Tibial artery (tissue), 4 donors: ENCODE measurements at regions of chr7 and their contacts with region 1.

Region 1: DNA sequence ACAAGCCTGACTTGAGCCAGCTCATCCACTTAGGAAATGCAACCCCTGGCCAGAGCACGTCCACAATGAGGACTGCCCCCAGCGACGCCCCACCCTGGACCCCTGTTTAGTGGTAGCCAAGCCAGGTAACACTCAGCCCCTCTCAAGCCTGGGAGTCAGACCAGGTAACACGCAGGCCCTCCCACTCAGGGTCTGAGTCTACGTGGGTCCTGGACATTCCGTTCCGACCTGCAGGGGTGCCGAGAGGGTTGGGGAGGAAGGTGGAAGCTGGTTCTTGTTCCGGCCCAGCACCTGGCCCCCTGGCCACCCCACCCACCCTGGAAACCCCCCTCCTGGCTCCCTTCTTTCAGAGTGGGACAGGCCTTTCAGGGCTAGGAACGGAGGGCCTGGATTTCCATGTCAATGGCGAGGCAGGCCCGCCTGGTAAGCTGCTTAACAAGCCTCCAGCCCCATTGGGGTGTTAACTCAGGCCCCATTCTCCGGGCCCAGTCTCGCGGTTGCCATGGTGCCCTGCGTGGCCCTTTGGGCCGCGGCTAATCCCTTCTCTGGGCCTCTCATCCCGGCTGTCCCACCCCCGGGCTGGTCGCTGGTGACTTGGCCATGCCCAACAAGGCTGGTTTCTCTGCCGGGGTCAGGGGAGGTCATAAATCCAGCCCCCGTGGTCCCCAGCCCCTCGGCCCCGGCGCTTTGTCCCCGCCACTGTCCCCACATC is 19.7 kb upstream of the LFNG start:
- DNase-seq: no peak
- H3K4me3 ChIP-seq: no peak overlapping the region
- H3K27ac ChIP-seq: no peak overlapping the region
- H3K4me1 ChIP-seq: no peaks in the 10 kb centered on the region
- H3K27me3 ChIP-seq: peaks cover 0 to 65% of the 10 kb centered on the region in 2 donors
- CTCF ChIP-seq: no peak

Region 2: DNA sequence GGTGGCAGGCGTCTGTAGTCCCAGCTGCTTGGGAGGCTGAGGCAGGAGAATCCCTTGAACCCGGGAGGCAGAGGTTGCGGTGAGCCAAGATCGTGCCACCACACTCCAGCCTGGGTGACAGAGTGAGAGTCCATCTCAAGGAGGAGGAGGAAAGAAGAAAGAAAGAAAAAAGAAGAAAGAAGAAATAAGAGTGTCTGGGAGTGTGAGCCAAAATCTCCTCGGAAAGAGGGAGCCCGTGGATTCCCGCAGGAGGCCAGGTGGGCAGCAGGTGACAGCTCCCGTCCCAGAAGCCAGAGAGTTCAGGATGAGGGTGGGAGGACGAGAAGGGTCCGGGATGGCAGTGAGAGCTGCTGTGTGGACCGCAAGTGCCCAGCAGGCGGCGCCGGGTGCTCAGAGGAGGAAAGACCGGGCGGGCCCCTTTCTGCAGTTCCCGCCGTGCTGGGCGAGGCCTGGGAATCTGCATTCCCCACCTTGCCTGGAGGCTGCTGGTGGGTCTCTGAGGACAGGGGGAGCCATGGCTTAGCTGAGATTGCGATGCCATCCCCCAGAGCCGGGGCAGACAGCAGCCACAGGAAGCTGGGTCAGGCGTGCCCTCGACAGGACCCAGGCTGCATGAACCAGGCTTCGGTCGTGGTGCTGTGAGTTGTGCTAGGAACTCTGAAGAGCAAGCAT is 171.0 kb after region 1 on chr7:
- intact Hi-C with region 1: no loop called
- DNase-seq: peak in 1 of 2 donors; percentile 51
- H3K4me3 ChIP-seq: no peak overlapping the region
- H3K27ac ChIP-seq: no peak overlapping the region
- H3K4me1 ChIP-seq: peaks cover 0 to 10% (median 0%) of the 10 kb centered on the region in 4 donors
- H3K27me3 ChIP-seq: peaks cover 0 to 6% of the 10 kb centered on the region in 2 donors
- CTCF ChIP-seq: peak; percentile 82 to 86

Region 3: GRCh38 chr7:3094701-3095445 is 595.0 kb after region 1 on chr7:
- intact Hi-C with region 1: loop called (anchors 5 kb)
- DNase-seq: peak in 1 of 2 donors; percentile 39
- H3K4me3 ChIP-seq: no peak overlapping the region
- H3K27ac ChIP-seq: no peak overlapping the region
- H3K4me1 ChIP-seq: no peaks in the 10 kb centered on the region
- H3K27me3 ChIP-seq: no peaks in the 10 kb centered on the region
- CTCF ChIP-seq: no peak